ENCODE measurements at regions of chr19 and their contacts with region 1.

Region 1: DNA sequence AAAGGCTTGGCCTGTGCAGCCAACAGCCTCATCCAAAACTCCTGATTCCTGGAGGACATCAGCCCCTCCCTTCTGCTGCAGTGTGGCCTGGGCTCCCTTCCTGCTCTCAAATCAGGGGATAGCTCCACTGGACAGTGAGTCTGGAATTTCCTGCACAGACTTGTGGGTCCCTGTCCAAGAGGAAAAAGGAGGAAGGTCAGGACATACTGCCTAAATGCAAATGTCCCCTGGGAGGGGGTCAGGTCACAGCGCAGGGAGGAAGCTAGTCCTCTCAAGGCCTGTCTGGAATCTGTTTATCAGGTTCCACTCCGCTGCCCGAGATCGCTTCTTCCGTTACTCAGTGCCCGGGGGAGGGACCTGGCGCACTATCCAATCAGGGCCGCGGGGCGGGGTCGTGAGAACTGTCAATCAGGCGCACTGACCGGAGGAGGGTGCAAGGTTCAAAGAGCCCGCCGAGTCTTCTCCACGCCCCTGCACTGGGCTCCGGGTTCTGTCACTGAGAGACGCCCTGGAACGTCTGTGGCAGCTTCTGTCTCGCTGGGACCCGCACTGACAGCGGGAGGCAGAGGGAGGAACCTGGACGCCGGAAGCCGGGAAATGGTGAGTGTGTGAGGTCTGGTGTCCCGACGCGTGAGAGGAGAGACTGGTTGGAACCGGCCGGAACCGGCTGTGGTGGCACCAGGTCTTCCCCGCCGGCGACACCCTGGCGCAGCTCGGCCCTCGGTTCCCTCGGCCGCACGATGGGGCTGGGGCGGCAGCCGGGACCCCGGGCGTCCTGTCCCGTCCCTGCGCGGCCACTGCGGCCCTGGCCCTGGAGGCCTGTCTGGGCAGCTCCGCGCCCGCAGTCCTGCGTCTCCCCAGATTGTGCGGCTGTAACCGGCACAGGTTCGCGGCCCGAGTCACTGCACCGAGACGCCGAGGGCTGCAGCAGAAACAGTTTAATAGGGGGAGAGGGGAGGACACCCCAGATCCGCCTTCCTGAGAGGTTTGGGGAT is at the start of gene ZNF441:
- DNase-seq: peak; percentile 87
- ATAC-seq: peak; percentile 95
- H3K4me3 Mint-ChIP-seq: peak within 1 kb of the TSS; percentile 99
- H3K27ac Mint-ChIP-seq: peak within 1 kb of the TSS; percentile 96
- H3K4me1 Mint-ChIP-seq: peaks cover 25% of the 10 kb centered on the region
- H3K27me3 Mint-ChIP-seq: peaks cover 2% of the 10 kb centered on the region
- CTCF ChIP-seq: no peak
- total RNA-seq, gene ZNF441: 23.3 and 23.9 TPM in 2 replicates

Region 2: GRCh38 chr19:11821474-11822109 is 54.7 kb after region 1 on chr19:
- CTCF ChIA-PET with region 1: no interaction called
- POLR2A ChIA-PET with region 1: interaction called, 11 read pairs
- intact Hi-C with region 1: no loop called
- DNase-seq: no peak
- ATAC-seq: peak; percentile 57
- H3K4me3 Mint-ChIP-seq: no peak overlapping the region
- H3K27ac Mint-ChIP-seq: no peak overlapping the region
- H3K4me1 Mint-ChIP-seq: peaks cover 14% of the 10 kb centered on the region
- H3K27me3 Mint-ChIP-seq: no peaks in the 10 kb centered on the region
- CTCF ChIP-seq: no peak

Measured in activated B cell treated with CpG ODN at 0.5 μM for 24 hours (primary cell).